CD8-positive, alpha-beta memory T cell (primary cell): ENCODE measurements at regions of chr1 and their contacts with region 1.

Region 1: GRCh38 chr1:18926315-18927081 is 24.1 kb upstream of the ALDH4A1 start:
- DNase-seq: peak; percentile 74 to 91 (median 77)
- H3K4me3 ChIP-seq: peak overlapping the region; percentile 67
- H3K4me3 Mint-ChIP-seq: peak overlapping the region; percentile 76 to 95 (median 82)
- H3K27ac ChIP-seq: peak overlapping the region; percentile 76
- H3K27ac Mint-ChIP-seq: peak overlapping the region; percentile 84 to 99 (median 98)
- H3K4me1 ChIP-seq: peaks cover 86% of the 10 kb centered on the region
- H3K4me1 Mint-ChIP-seq: peaks cover 80 to 97% (median 83%) of the 10 kb centered on the region in 3 donors
- H3K27me3 ChIP-seq: no peaks in the 10 kb centered on the region
- H3K27me3 Mint-ChIP-seq: peaks cover 0 to 4% of the 10 kb centered on the region in 2 donors

Region 2: DNA sequence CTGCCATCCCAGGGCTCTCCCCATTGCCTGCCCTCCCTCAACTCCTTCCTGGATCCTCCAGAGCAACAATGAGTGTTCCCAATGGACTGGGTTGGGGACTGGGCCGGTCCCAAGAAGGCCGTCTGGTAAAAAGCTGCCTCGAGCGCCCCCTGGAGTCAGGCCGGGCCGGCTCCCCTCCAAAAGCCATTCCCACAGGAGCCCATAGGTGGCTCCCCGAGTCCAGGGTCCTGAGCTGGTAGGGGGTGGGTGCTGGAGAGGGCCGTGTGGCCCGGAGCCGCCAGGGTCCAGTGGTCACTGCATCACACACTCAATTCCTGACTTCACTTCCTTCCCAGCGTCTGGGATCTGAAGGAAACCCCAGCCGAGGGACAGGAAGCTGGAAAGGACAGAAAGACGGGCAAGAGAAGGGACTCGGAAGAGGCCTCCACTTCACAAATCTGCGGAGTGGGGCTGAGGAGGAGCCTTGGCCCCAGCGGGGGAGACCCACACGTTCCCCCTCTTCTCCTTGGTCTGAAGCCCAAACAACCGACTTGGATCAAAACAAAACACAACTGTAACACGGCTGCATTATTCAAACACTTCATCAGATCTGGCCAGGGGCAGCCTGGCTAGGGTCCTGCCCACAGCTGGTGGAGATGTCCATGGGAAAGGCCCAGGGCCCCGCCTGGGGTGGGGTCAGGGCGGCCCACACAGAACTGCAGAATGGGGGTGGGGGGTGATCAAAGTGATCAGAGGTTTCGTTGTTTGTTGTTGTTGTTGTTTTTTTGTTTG is 13.2 kb before region 1 on chr1:
- CTCF ChIA-PET with region 1: interaction called, 88 read pairs
- POLR2A ChIA-PET with region 1: interaction called, 5 read pairs
- DNase-seq: peak; percentile 57 to 78 (median 65)
- H3K4me3 ChIP-seq: no peak overlapping the region
- H3K4me3 Mint-ChIP-seq: no peak overlapping the region
- H3K27ac ChIP-seq: no peak overlapping the region
- H3K27ac Mint-ChIP-seq: peak overlapping the region; percentile 66 to 93 (median 84)
- H3K4me1 ChIP-seq: no peaks in the 10 kb centered on the region
- H3K4me1 Mint-ChIP-seq: peaks cover 6 to 19% (median 9%) of the 10 kb centered on the region in 3 donors
- H3K27me3 ChIP-seq: no peaks in the 10 kb centered on the region
- H3K27me3 Mint-ChIP-seq: no peaks in the 10 kb centered on the region

Region 3: DNA sequence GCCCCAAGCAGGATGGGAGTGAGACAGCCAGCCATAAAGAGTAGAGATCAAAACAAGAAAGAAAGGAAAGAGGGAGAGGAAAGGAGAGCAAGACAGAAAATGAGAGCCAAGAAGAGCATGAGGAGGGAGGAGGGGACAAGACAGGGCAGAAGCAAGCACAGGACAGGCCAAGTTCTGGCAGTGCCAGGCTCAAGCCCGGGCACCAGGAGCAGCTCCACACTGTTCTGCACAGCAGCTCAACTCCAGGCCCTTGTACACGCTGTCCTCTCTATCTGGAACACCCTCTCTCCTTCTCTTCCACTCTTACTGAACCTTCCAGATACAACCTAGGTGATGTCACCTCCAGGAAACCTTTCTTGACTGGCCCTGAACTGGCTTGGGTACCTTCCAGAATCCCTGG is 18.3 kb after region 1 on chr1:
- CTCF ChIA-PET with region 1: interaction called, 12 read pairs
- POLR2A ChIA-PET with region 1: interaction called, 6 read pairs
- DNase-seq: no peak
- H3K4me3 ChIP-seq: no peak overlapping the region
- H3K4me3 Mint-ChIP-seq: peak overlapping the region; percentile 17 to 79 (median 48)
- H3K27ac ChIP-seq: no peak overlapping the region
- H3K27ac Mint-ChIP-seq: peak overlapping the region; percentile 64 to 100 (median 80)
- H3K4me1 ChIP-seq: peaks cover 86% of the 10 kb centered on the region
- H3K4me1 Mint-ChIP-seq: peaks cover 86 to 96% (median 93%) of the 10 kb centered on the region in 3 donors
- H3K27me3 ChIP-seq: no peaks in the 10 kb centered on the region
- H3K27me3 Mint-ChIP-seq: no peaks in the 10 kb centered on the region

Region 4: GRCh38 chr1:18949686-18950400 is 23.3 kb after region 1 on chr1:
- CTCF ChIA-PET with region 1: interaction called, 22 read pairs
- POLR2A ChIA-PET with region 1: interaction called, 110 read pairs
- DNase-seq: peak in 1 of 5 donors; percentile 31
- H3K4me3 ChIP-seq: peak overlapping the region; percentile 57
- H3K4me3 Mint-ChIP-seq: peak overlapping the region; percentile 93 to 98 (median 95)
- H3K27ac ChIP-seq: peak overlapping the region; percentile 99
- H3K27ac Mint-ChIP-seq: peak overlapping the region; percentile 99 to 100 (median 100)
- H3K4me1 ChIP-seq: peaks cover 98% of the 10 kb centered on the region
- H3K4me1 Mint-ChIP-seq: peaks cover 95 to 98% (median 97%) of the 10 kb centered on the region in 3 donors
- H3K27me3 ChIP-seq: no peaks in the 10 kb centered on the region
- H3K27me3 Mint-ChIP-seq: peaks cover 0 to 3% of the 10 kb centered on the region in 2 donors

Region 5: GRCh38 chr1:18956369-18957135 is 30.1 kb after region 1 on chr1 and contains the start of gene IFFO2:
- CTCF ChIA-PET with region 1: interaction called, 22 read pairs
- POLR2A ChIA-PET with region 1: interaction called, 110 read pairs
- DNase-seq: peak; percentile 97 to 100 (median 98)
- H3K4me3 ChIP-seq: peak within 1 kb of the TSS; percentile 69
- H3K4me3 Mint-ChIP-seq: peak within 1 kb of the TSS; percentile 93 to 98 (median 95)
- H3K27ac ChIP-seq: peak within 1 kb of the TSS; percentile 60
- H3K27ac Mint-ChIP-seq: peak within 1 kb of the TSS; percentile 95 to 100 (median 100)
- H3K4me1 ChIP-seq: peaks cover 51% of the 10 kb centered on the region
- H3K4me1 Mint-ChIP-seq: peaks cover 53 to 62% (median 54%) of the 10 kb centered on the region in 3 donors
- H3K27me3 ChIP-seq: no peaks in the 10 kb centered on the region
- H3K27me3 Mint-ChIP-seq: peaks cover 0 to 4% of the 10 kb centered on the region in 2 donors
- total RNA-seq, gene IFFO2: 33.1 to 37.7 TPM

Region 6: GRCh38 chr1:18972531-18972930 is 46.0 kb after region 1 on chr1:
- CTCF ChIA-PET with region 1: interaction called, 19 read pairs
- POLR2A ChIA-PET with region 1: interaction called, 3 read pairs
- DNase-seq: peak in 3 of 5 donors; percentile 46 to 52 (median 47)
- H3K4me3 ChIP-seq: no peak overlapping the region
- H3K4me3 Mint-ChIP-seq: no peak overlapping the region
- H3K27ac ChIP-seq: no peak overlapping the region
- H3K27ac Mint-ChIP-seq: no peak overlapping the region
- H3K4me1 ChIP-seq: no peaks in the 10 kb centered on the region
- H3K4me1 Mint-ChIP-seq: peaks cover 2 to 5% (median 2%) of the 10 kb centered on the region in 3 donors
- H3K27me3 ChIP-seq: no peaks in the 10 kb centered on the region
- H3K27me3 Mint-ChIP-seq: peaks cover 3 to 24% of the 10 kb centered on the region in 2 donors